Caco-2 (cell line): ENCODE measurements at regions of chr2 and their contacts with region 1.

Region 1: DNA sequence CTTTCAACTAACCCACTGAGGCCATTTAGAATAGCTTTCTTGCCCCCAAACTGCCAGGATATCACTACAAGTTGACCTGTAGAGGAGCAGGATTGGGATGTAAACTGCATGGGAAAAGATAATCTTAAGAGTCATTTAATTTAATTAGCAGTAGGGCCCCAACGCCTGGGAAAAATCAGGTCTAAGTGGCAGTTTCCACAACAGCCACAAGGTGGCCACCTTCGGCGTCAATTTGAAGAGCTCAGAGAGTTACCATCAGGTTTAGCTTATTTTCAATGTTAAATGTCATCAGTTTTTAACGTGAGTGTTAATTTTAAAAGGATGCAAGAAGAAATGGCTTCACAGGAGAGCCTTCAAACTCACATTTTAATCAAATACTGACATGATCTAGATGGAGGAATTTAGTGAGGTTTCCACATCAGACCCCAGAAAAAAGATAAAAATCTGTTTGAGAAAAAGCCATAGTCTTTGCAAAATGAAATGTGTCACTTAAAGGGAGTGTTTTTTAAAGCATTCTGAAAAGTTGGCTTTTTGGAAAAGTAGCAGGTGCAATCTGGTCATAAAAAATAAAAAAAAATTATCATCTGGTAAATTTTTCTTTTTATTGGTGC is 77.3 kb upstream of the UPP2 start:
- DNase-seq: peak in 1 of 2 experiments; percentile 61
- H3K4me3 ChIP-seq: no peak overlapping the region
- H3K4me3 Mint-ChIP-seq: no peak overlapping the region
- H3K27ac Mint-ChIP-seq: no peak overlapping the region
- H3K4me1 ChIP-seq: no peaks in the 10 kb centered on the region; the same call in 1 of the 2 replicates
- H3K4me1 Mint-ChIP-seq: no peaks in the 10 kb centered on the region
- H3K27me3 ChIP-seq: no peaks in the 10 kb centered on the region
- H3K27me3 Mint-ChIP-seq: no peaks in the 10 kb centered on the region
- CTCF ChIP-seq: peak; percentile 81 to 88

Region 2: GRCh38 chr2:158174495-158174894 is 150.1 kb after region 1 on chr2:
- CTCF ChIA-PET with region 1: interaction called, 10 read pairs
- POLR2A ChIA-PET with region 1: no interaction called
- intact Hi-C with region 1: no loop called
- DNase-seq: no peak
- H3K4me3 ChIP-seq: no peak overlapping the region
- H3K4me3 Mint-ChIP-seq: no peak overlapping the region
- H3K27ac Mint-ChIP-seq: no peak overlapping the region
- H3K4me1 ChIP-seq: peaks cover 4% of the 10 kb centered on the region; the same call in 1 of the 2 replicates
- H3K4me1 Mint-ChIP-seq: no peaks in the 10 kb centered on the region
- H3K27me3 ChIP-seq: no peaks in the 10 kb centered on the region
- H3K27me3 Mint-ChIP-seq: no peaks in the 10 kb centered on the region
- CTCF ChIP-seq: no peak